Activated CD4-positive, alpha-beta memory T cell treated with anti-CD3 and anti-CD28 coated beads, Interleukin-2, amount 10 ng/mL, durations not matched to agents 7 days and 5 days (primary cell): ENCODE measurements at regions of chr5 and their contacts with region 1.

Region 1: GRCh38 chr5:178075840-178076548 is 37.3 kb upstream of the N4BP3 start:
- DNase-seq: peak; percentile 79
- H3K4me3 Mint-ChIP-seq: no peak overlapping the region
- H3K27ac Mint-ChIP-seq: no peak overlapping the region
- H3K4me1 Mint-ChIP-seq: peaks cover 6% of the 10 kb centered on the region
- H3K27me3 Mint-ChIP-seq: peaks cover 13% of the 10 kb centered on the region

Region 2: DNA sequence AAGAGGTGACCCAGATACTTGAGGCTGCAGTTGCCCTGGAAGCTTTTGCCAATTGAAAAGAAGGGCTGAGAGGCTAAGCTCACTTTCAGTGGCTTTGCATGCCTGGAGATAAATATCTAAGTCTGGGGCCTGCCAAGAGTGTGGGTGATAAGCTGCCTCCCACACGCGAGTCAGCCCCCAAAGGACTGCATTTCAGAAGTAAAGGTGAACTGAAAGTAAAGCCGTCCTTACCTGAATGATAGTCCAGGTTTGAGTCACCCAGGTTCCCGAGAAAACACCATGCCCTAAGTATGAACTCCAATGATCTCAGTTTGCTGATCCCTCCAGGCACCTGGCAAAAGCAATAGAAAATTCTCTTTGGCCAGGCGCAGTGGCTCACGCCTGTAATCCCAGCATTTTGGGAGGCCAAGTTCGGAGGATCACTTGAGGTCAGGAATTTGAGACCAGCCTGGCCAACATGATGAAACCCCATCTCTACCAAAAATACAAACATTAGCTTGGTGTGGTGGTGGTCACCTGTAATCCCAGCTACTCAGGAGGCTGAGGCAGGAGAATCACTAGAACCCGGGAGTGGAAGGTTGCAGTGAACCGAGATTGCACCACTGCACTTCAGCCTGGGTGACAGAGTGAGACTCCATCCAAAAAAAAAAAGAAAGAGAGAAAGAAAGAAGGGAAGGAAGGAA is 15.0 kb after region 1 on chr5:
- CTCF ChIA-PET with region 1: interaction called, 16 read pairs
- POLR2A ChIA-PET with region 1: no interaction called
- DNase-seq: no peak
- H3K4me3 Mint-ChIP-seq: no peak overlapping the region
- H3K27ac Mint-ChIP-seq: no peak overlapping the region
- H3K4me1 Mint-ChIP-seq: peaks cover 8% of the 10 kb centered on the region
- H3K27me3 Mint-ChIP-seq: peaks cover 5% of the 10 kb centered on the region

Region 3: DNA sequence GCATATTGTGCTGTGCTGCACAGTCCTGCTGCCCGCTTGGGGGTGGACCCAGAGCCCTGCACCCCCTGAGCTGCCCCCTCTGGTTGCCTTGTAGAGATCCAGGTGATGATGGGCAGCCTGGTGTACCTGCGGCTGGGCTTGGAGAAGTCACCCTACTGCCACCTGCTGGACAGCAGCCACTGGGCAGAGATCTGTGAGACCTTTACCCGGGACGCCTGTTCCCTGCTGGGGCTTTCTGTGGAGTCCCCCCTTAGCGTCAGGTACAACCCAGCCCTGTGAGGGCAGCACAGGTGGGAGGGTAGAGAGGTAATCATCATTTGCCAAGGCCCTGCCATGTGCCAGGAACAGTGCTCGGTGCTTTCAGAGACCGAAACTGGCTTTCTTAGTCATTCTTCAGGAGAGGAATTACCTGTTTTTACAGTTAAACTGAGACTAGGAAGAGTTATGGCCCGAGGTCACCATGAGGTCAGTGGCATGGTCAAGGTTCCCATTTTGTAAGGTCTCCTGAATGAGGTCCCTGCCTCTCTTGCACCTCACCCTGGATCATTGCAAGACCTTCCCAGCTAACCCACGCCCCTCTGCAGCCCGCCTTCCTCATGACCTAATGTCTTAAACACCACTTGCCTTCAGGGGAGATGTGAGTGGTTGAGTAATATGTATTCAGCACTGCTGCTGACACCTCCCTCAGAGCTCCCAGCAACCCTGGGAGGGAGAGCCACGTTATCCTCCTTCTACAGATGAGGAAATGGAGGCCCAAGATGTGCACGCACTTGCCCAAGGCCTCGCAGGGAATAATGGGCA is 70.2 kb after region 1 on chr5:
- CTCF ChIA-PET with region 1: interaction called, 95 read pairs
- POLR2A ChIA-PET with region 1: interaction called, 8 read pairs
- DNase-seq: peak; percentile 74
- H3K4me3 Mint-ChIP-seq: no peak overlapping the region
- H3K27ac Mint-ChIP-seq: no peak overlapping the region
- H3K4me1 Mint-ChIP-seq: peaks cover 36% of the 10 kb centered on the region
- H3K27me3 Mint-ChIP-seq: no peaks in the 10 kb centered on the region

Region 4: DNA sequence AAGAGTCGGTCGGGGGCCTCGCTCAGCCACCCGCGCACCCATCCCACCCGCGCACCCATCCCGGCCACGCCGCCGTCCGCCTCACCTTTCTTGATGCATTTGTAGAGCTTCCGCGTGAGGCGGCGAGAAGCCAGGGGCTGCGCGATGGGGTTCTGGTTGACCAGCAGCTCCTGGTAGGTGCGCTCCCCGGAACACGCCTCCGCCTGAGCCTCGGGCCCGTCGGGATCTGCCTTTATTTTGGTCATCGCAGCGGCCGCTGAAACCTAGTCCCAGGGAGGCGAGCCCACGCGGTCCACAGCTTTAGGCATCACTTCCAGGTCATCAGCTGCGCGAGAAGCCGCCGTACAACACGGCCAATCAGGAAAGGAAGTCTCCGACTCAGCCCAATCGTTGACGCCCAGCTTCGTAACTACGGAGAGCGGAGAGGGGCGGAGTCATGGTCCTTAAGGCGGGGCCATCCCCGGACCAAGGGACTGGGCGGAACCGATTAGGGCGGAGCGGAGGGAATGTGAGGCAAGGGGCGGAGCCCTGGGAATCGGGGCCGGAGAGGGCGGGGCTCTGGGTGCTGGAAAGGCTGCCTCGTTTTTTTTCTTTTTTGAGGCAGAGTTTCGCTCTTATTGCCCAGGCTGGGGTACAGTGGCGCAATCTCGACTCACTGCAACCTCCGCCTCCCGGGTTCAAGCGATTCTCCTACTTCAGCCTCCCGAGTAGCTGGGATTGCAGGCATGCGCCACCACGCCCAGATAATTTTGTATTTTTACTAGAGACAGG is 77.8 kb after region 1 on chr5 and contains the start of gene NHP2:
- CTCF ChIA-PET with region 1: interaction called, 95 read pairs
- POLR2A ChIA-PET with region 1: no interaction called
- DNase-seq: peak; percentile 99
- H3K4me3 Mint-ChIP-seq: peak within 1 kb of the TSS; percentile 97
- H3K27ac Mint-ChIP-seq: peak within 1 kb of the TSS; percentile 81
- H3K4me1 Mint-ChIP-seq: peaks cover 50% of the 10 kb centered on the region
- H3K27me3 Mint-ChIP-seq: no peaks in the 10 kb centered on the region
- total RNA-seq, gene NHP2: 101 to 106 TPM

Region 5: DNA sequence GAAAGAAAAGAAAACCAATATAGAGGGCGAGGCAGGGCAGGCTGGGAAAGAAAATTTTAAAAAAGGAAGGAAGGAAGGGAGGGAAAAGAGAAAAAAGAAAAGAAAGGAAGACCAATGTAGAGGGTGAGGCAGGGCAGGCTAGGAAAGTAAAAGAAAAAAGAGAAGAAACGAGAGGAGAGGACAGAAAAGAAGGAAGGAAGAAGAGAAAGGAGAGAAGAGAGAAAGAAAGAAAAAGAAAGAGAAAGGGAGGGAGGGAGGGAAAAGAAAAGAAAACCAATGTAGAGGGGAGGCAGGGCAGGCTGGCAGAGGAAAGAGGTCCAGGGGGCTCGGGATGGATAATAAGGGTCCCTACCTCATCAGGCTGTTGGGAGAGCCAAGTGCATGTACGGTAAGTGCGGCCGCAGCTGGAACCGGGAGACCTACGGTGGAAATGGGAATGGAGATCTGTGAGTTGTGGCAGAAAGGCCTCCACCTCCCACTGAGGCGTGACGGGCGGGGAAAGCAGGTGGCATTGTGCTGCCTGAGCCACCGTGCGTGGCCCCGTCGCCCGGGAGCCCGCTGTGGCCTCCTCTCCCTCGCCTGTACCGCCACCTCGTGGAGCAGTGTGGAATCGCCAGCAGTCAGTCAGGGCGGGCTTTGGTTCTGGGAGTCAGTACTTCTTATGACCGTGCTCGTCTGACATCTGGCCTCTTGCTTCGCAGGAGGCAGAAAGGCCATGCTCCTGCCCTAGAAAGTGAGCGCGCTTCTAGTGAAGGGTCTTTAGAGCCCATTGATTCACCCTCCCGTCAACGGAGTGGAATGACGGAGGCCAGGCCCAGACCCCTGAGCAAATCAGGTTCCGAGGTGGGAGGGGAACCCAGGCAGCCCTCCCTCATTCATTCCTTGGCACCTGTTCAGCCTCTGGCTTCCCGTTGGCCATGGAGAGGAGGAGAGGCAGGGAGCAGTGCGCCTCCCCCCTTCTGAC is 88.1 kb after region 1 on chr5:
- CTCF ChIA-PET with region 1: interaction called, 26 read pairs
- POLR2A ChIA-PET with region 1: interaction called, 4 read pairs
- DNase-seq: peak; percentile 92
- H3K4me3 Mint-ChIP-seq: no peak overlapping the region
- H3K27ac Mint-ChIP-seq: no peak overlapping the region
- H3K4me1 Mint-ChIP-seq: peaks cover 6% of the 10 kb centered on the region
- H3K27me3 Mint-ChIP-seq: peaks cover 8% of the 10 kb centered on the region